Activated T-helper 2 cell treated with anti-CD3 and anti-CD28 coated beads, Interferon-gamma antibody, Interleukin-2, Interleukin-4, amounts not matched to agents 10 μg/mL and 5 μg/mL and 100 μg/mL, durations not matched to agents 14 hours and 24 hours and 36 hours (primary cell): ENCODE measurements at regions of chr7 and their contacts with region 1.

Region 1: GRCh38 chr7:130929896-130930659 is 196.1 kb upstream of the KLF14 start:
- DNase-seq: no peak
- H3K4me3 Mint-ChIP-seq: no peak overlapping the region
- H3K27ac Mint-ChIP-seq: peak overlapping the region; percentile 77
- H3K4me1 Mint-ChIP-seq: peaks cover 71% of the 10 kb centered on the region
- H3K27me3 Mint-ChIP-seq: no peaks in the 10 kb centered on the region

Region 2: DNA sequence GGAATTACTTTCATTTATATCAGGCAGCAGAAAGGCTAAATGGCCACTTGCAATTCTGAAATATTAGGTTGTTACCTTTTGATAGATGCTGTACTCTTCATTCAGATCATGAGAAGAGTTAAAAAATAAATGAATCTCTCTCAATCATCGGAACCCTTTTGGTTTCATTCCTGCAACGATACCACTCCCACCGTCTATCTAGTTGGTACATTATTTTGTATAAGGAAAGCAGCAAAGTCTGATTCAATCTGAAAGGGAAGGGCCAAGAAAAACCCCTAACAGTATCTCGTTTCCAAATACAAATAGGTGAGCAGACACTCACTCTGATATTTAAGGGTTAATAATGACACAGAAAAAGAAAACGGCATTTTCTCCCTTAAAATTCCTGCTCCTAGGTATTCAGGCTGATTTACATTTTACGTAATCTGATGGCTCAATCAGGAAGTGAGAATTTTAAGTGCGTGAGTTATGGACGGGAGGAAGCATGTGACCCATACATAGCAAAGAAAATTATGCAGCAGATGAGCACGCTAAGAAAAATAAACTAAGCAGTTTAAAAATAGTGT is 13.3 kb after region 1 on chr7:
- intact Hi-C with region 1: loop called (anchors 1 kb)
- DNase-seq: no peak
- H3K4me3 Mint-ChIP-seq: peak overlapping the region; percentile 68
- H3K27ac Mint-ChIP-seq: peak overlapping the region; percentile 70
- H3K4me1 Mint-ChIP-seq: peaks cover 85% of the 10 kb centered on the region
- H3K27me3 Mint-ChIP-seq: no peaks in the 10 kb centered on the region

Region 3: GRCh38 chr7:130961128-130961601 is 31.1 kb after region 1 on chr7:
- intact Hi-C with region 1: loop called (anchors 1 kb)
- DNase-seq: peak; percentile 85
- H3K4me3 Mint-ChIP-seq: peak overlapping the region; percentile 95
- H3K27ac Mint-ChIP-seq: peak overlapping the region; percentile 98
- H3K4me1 Mint-ChIP-seq: peaks cover 34% of the 10 kb centered on the region
- H3K27me3 Mint-ChIP-seq: no peaks in the 10 kb centered on the region

Region 4: GRCh38 chr7:130996841-130997231 is 66.8 kb after region 1 on chr7:
- intact Hi-C with region 1: no loop called
- DNase-seq: no peak
- H3K4me3 Mint-ChIP-seq: peak overlapping the region; percentile 66
- H3K27ac Mint-ChIP-seq: peak overlapping the region; percentile 90
- H3K4me1 Mint-ChIP-seq: peaks cover 66% of the 10 kb centered on the region
- H3K27me3 Mint-ChIP-seq: no peaks in the 10 kb centered on the region

Region 5: GRCh38 chr7:131792311-131792710 is 862.2 kb after region 1 on chr7:
- intact Hi-C with region 1: no loop called
- DNase-seq: no peak
- H3K4me3 Mint-ChIP-seq: no peak overlapping the region
- H3K27ac Mint-ChIP-seq: no peak overlapping the region
- H3K4me1 Mint-ChIP-seq: no peaks in the 10 kb centered on the region
- H3K27me3 Mint-ChIP-seq: no peaks in the 10 kb centered on the region